ENCODE measurements at regions of chr20 and their contacts with region 1.

Region 1: GRCh38 chr20:31849455-31849925 is 4.1 kb upstream of the FOXS1 start:
- DNase-seq: no peak
- ATAC-seq: no peak
- H3K4me3 ChIP-seq: no peak overlapping the region
- H3K4me3 Mint-ChIP-seq: no peak overlapping the region
- H3K27ac ChIP-seq: no peak overlapping the region
- H3K27ac Mint-ChIP-seq: no peak overlapping the region
- H3K4me1 ChIP-seq: no peaks in the 10 kb centered on the region
- H3K4me1 Mint-ChIP-seq: no peaks in the 10 kb centered on the region
- H3K27me3 ChIP-seq: peaks cover 0 to 4% of the 10 kb centered on the region in 2 experiments
- H3K27me3 Mint-ChIP-seq: peaks cover 18% of the 10 kb centered on the region
- CTCF ChIP-seq: no peak

Region 2: DNA sequence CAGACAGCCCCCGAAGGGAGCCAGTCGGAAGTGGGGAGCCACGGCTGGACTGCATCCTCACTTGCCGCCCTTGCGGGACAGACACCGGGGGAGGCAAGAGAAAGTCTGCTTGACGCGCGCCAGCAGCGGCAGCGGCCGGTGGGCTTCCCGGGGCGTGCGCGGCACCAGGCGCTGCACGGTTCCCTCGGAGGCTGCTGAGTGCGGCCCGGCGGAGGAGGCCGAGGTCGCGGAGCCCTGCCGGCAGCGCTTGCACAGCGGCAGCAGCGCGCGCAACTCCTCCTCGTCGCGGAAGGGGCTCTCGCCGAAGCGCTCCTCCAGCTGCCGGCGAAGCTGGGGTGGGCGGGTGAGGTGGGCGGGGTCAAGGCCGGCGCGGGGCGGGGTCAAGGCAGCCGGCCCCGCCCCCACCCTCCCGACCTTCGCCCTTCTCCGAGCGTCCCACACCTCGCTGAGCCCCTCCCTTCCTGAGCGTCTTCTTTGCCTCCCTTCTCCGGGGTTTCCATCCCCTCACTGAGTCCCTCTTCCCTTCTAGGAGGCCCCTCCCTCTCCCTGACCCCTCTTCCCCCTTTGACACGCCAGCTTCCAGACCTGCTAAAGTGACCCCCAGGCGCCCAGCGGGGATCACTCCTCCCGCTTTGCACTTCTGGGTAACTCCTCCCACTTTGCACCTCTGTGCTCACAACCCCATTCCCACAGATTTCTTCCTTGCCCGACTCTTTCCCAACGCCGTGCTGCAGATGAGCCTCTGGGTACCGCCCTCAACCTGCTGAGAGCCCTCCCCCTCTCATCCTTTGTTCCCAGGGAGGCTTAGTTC is 12.1 kb after region 1 on chr20:
- CTCF ChIA-PET with region 1: interaction called, 30 read pairs
- POLR2A ChIA-PET with region 1: no interaction called
- intact Hi-C with region 1: no loop called
- DNase-seq: peak; percentile 47 to 85 (median 70)
- ATAC-seq: peak; percentile 93
- H3K4me3 ChIP-seq: peak overlapping the region; percentile 37 to 43
- H3K4me3 Mint-ChIP-seq: peak overlapping the region; percentile 78
- H3K27ac ChIP-seq: no peak overlapping the region
- H3K27ac Mint-ChIP-seq: no peak overlapping the region
- H3K4me1 ChIP-seq: peaks cover 9% of the 10 kb centered on the region
- H3K4me1 Mint-ChIP-seq: peaks cover 11% of the 10 kb centered on the region
- H3K27me3 ChIP-seq: peaks cover 16% of the 10 kb centered on the region in 2 experiments
- H3K27me3 Mint-ChIP-seq: peaks cover 28% of the 10 kb centered on the region
- CTCF ChIP-seq: no peak

Region 3: GRCh38 chr20:31868853-31869672 is 19.6 kb after region 1 on chr20:
- CTCF ChIA-PET with region 1: interaction called, 30 read pairs
- POLR2A ChIA-PET with region 1: no interaction called
- intact Hi-C with region 1: no loop called
- DNase-seq: no peak
- ATAC-seq: no peak
- H3K4me3 ChIP-seq: peak overlapping the region in 1 of 2 experiments; percentile 44
- H3K4me3 Mint-ChIP-seq: peak overlapping the region; percentile 90
- H3K27ac ChIP-seq: no peak overlapping the region
- H3K27ac Mint-ChIP-seq: no peak overlapping the region
- H3K4me1 ChIP-seq: peaks cover 11% of the 10 kb centered on the region
- H3K4me1 Mint-ChIP-seq: peaks cover 11% of the 10 kb centered on the region
- H3K27me3 ChIP-seq: peaks cover 18 to 21% of the 10 kb centered on the region in 2 experiments
- H3K27me3 Mint-ChIP-seq: peaks cover 32% of the 10 kb centered on the region
- CTCF ChIP-seq: no peak

Region 4: DNA sequence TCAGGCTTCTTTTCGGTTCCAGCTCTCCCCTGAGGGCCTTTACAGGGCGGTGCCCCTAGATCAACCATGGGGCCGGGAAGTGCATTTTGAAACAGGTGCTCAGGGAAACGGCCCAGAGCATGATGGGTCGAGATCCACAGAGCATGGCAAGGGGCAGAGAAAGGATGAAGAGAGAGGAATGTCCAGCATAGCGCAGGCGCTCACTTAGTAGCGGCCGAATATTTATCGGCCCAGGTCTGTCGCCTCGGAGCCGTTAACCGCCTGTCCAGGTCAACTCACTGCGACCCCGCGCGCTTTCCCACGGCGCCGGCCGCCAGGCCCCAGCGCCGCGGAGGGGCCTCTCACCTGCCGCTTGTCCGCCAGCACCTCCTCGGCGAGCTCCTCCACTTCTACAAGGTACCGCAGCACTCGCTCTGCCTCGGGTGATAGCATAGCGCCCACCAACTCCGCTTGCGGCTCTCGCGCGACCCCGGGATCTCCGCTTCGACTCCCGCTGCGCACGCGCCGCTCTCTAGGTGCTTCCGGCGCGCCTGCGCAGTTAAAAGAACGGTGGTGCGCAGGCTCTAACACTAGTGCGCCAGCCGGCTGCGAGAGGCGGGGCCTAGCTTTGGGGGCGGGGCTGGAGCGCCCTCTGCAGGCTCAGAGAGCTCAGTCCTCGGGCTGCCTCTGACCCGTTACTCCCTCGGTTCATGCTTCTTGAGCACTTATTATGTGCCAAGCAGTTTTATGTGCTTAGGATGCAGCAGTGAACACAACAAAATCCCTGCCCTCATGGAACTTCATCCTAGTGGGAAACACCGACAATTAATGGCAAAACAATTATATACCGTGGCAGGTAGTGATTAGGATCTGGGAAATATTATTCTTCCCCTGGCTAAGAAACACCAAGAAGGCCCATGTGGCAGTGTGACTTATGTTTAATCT is 102.3 kb after region 1 on chr20 and contains the start of gene PDRG1:
- CTCF ChIA-PET with region 1: interaction called, 38 read pairs
- POLR2A ChIA-PET with region 1: no interaction called
- intact Hi-C with region 1: loop called in 1 of 2 experiments (anchors 1 kb)
- DNase-seq: peak; percentile 91 to 98 (median 97)
- ATAC-seq: peak; percentile 98
- H3K4me3 ChIP-seq: peak within 1 kb of the TSS; percentile 84 to 96
- H3K4me3 Mint-ChIP-seq: peak within 1 kb of the TSS; percentile 97
- H3K27ac ChIP-seq: peak within 1 kb of the TSS; percentile 46 to 71
- H3K27ac Mint-ChIP-seq: peak within 1 kb of the TSS; percentile 96
- H3K4me1 ChIP-seq: peaks cover 16% of the 10 kb centered on the region
- H3K4me1 Mint-ChIP-seq: peaks cover 31% of the 10 kb centered on the region
- H3K27me3 ChIP-seq: no peaks in the 10 kb centered on the region
- H3K27me3 Mint-ChIP-seq: peaks cover 12% of the 10 kb centered on the region
- CTCF ChIP-seq: peak; percentile 88
- total RNA-seq, gene PDRG1: 12.2 to 13.4 TPM

Region 5: DNA sequence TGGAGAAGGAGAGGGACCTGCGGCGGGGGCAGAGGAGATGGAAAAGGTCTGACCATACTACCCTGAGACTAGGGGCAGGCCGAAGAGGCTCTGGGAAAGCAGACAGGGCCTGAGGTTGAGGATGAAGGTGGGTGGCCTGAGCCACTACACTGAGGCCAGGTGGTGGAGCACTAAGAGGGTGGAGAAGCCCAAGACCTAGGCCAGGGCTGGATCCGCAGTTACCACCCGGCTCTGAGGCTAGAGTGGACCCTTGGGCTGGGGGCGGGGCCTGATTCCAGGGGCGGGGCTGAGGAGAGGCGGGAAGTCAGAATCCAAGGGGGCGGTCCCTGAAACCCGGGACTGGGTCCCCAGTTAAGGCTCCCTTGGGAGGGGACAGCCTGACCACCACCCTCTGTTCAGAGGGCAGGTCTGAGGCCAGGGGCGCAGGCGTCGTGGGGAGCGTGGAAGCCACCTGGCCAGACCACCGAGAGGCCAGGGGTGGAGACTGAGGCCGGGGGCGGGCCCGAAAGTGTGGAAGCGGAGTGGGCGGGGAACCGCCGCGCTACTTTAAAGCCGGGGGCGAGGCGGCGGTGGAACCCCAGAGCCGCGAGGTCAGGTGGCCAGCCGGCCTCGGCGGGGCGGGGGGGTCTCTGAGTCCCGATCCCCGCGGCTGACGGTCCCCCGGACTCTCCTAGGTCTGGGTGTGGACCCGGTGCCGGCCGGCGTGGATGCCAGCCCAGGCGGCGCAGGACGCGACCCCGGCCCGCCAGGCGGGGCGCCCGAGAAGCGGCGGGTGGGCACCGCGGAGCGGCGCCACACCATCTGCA is 169.0 kb after region 1 on chr20:
- CTCF ChIA-PET with region 1: interaction called, 5 read pairs
- POLR2A ChIA-PET with region 1: no interaction called
- intact Hi-C with region 1: loop called in 1 of 2 experiments (anchors 5 kb)
- DNase-seq: peak; percentile 16 to 54 (median 41)
- ATAC-seq: peak; percentile 51
- H3K4me3 ChIP-seq: peak overlapping the region; percentile 41 to 60
- H3K4me3 Mint-ChIP-seq: peak overlapping the region; percentile 79
- H3K27ac ChIP-seq: no peak overlapping the region
- H3K27ac Mint-ChIP-seq: no peak overlapping the region
- H3K4me1 ChIP-seq: peaks cover 17% of the 10 kb centered on the region
- H3K4me1 Mint-ChIP-seq: peaks cover 21% of the 10 kb centered on the region
- H3K27me3 ChIP-seq: peaks cover 18 to 25% of the 10 kb centered on the region in 2 experiments
- H3K27me3 Mint-ChIP-seq: peaks cover 71% of the 10 kb centered on the region
- CTCF ChIP-seq: no peak

Region 6: DNA sequence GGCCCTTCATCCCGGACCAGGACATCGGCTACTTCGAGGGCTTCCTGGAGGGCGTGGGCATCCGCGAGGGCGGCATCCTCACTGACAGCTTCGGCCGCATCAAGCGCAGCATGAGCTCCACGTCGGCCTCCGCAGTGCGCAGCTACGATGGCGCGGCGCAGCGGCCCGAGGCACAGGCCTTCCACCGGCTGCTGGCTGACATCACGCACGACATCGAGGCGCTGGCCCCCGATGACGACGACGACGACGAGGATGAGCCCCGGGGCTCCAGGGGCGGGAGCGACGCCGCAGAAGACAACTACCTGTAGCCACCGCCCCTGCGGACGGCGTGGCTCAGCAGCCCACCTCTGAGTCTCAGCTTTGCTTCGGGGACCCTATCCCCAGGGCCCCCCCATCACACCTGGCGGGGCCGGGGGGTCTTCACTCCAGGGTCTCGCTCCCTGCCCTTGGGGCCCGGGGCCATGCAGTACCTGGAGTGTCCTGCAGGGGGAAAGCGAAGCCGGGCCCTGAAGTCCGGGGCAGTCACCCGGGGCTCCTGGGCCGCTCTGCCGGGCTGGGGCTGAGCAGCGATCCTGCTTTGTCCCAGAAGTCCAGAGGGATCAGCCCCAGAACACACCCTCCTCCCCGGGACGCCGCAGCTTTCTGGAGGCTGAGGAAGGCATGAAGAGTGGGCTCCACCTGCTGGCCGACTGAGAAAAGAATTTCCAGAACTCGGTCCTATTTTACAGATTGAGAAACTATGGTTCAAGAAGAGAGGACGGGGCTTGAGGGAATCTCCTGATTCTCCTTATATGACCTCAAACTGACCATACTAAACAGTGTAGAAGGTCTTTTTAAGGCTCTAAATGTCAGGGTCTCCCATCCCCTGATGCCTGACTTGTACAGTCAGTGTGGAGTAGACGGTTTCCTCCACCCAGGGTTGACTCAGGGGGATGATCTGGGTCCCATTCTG is 181.8 kb after region 1 on chr20:
- CTCF ChIA-PET with region 1: interaction called, 42 read pairs
- POLR2A ChIA-PET with region 1: no interaction called
- intact Hi-C with region 1: loop called (anchors 1 kb)
- DNase-seq: peak; percentile 22 to 73 (median 59)
- ATAC-seq: peak; percentile 75
- H3K4me3 ChIP-seq: peak overlapping the region; percentile 28 to 32
- H3K4me3 Mint-ChIP-seq: peak overlapping the region; percentile 39
- H3K27ac ChIP-seq: no peak overlapping the region
- H3K27ac Mint-ChIP-seq: no peak overlapping the region
- H3K4me1 ChIP-seq: peaks cover 4% of the 10 kb centered on the region
- H3K4me1 Mint-ChIP-seq: peaks cover 2% of the 10 kb centered on the region
- H3K27me3 ChIP-seq: peaks cover 4 to 7% of the 10 kb centered on the region in 2 experiments
- H3K27me3 Mint-ChIP-seq: peaks cover 31% of the 10 kb centered on the region
- CTCF ChIP-seq: peak; percentile 100

Region 7: GRCh38 chr20:32091888-32092346 is 242.4 kb after region 1 on chr20:
- CTCF ChIA-PET with region 1: interaction called, 9 read pairs
- POLR2A ChIA-PET with region 1: no interaction called
- intact Hi-C with region 1: loop called (anchors 1 kb)
- DNase-seq: peak; percentile 56 to 80 (median 77)
- ATAC-seq: peak; percentile 98
- H3K4me3 ChIP-seq: no peak overlapping the region
- H3K4me3 Mint-ChIP-seq: no peak overlapping the region
- H3K27ac ChIP-seq: no peak overlapping the region
- H3K27ac Mint-ChIP-seq: no peak overlapping the region
- H3K4me1 ChIP-seq: no peaks in the 10 kb centered on the region
- H3K4me1 Mint-ChIP-seq: no peaks in the 10 kb centered on the region
- H3K27me3 ChIP-seq: no peaks in the 10 kb centered on the region
- H3K27me3 Mint-ChIP-seq: peaks cover 9% of the 10 kb centered on the region
- CTCF ChIP-seq: peak; percentile 94

Measured in CD8-positive, alpha-beta T cell (primary cell).